Naive thymus-derived CD4-positive, alpha-beta T cell (primary cell): ENCODE measurements at regions of chr3 and their contacts with region 1.

Region 1: GRCh38 chr3:48556793-48557626 is at the start of gene PFKFB4:
- DNase-seq: peak; percentile 97 to 100 (median 99)
- ATAC-seq: peak; percentile 91
- H3K4me3 ChIP-seq: peak within 1 kb of the TSS; percentile 85
- H3K4me3 Mint-ChIP-seq: peak within 1 kb of the TSS; percentile 77 to 93 (median 84)
- H3K27ac ChIP-seq: peak within 1 kb of the TSS; percentile 52
- H3K27ac Mint-ChIP-seq: peak within 1 kb of the TSS; percentile 62 to 90 (median 80)
- H3K4me1 ChIP-seq: peaks cover 5 to 10% of the 10 kb centered on the region in 2 donors
- H3K4me1 Mint-ChIP-seq: peaks cover 11 to 66% (median 24%) of the 10 kb centered on the region in 7 donors
- H3K27me3 ChIP-seq: no peaks in the 10 kb centered on the region
- H3K27me3 Mint-ChIP-seq: peaks cover 0 to 3% (median 0%) of the 10 kb centered on the region in 5 donors
- total RNA-seq, gene PFKFB4: 3.0 to 64.2 (median 3.7) TPM

Region 2: DNA sequence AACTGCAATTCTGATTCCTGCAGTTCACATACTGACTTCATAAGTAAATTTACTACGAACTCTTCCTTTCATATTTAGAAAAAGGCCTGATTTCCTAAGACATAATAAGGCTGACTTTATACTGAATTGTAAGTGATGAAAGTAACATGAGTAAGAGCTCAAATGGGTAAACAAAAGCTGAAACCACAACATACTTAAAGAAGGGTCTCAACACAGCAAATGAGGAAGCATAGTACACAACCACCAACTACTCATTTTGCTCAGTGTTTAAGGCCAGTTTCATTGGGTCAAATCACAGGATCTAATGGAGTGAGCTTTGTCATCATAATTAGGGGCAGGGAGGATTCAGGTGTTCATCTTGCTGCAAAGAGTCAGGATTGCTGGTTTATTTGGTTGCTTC is 1474.5 kb before region 1 on chr3:
- CTCF ChIA-PET with region 1: no interaction called
- POLR2A ChIA-PET with region 1: no interaction called
- intact Hi-C with region 1: no loop called
- DNase-seq: no peak
- ATAC-seq: peak; percentile 48
- H3K4me3 ChIP-seq: no peak overlapping the region
- H3K4me3 Mint-ChIP-seq: no peak overlapping the region
- H3K27ac ChIP-seq: no peak overlapping the region
- H3K27ac Mint-ChIP-seq: peak overlapping the region in 6 of 9 donors; percentile 13 to 77 (median 56)
- H3K4me1 ChIP-seq: no peaks in the 10 kb centered on the region
- H3K4me1 Mint-ChIP-seq: peaks cover 10 to 31% (median 20%) of the 10 kb centered on the region in 7 donors
- H3K27me3 ChIP-seq: no peaks in the 10 kb centered on the region
- H3K27me3 Mint-ChIP-seq: no peaks in the 10 kb centered on the region

Region 3: DNA sequence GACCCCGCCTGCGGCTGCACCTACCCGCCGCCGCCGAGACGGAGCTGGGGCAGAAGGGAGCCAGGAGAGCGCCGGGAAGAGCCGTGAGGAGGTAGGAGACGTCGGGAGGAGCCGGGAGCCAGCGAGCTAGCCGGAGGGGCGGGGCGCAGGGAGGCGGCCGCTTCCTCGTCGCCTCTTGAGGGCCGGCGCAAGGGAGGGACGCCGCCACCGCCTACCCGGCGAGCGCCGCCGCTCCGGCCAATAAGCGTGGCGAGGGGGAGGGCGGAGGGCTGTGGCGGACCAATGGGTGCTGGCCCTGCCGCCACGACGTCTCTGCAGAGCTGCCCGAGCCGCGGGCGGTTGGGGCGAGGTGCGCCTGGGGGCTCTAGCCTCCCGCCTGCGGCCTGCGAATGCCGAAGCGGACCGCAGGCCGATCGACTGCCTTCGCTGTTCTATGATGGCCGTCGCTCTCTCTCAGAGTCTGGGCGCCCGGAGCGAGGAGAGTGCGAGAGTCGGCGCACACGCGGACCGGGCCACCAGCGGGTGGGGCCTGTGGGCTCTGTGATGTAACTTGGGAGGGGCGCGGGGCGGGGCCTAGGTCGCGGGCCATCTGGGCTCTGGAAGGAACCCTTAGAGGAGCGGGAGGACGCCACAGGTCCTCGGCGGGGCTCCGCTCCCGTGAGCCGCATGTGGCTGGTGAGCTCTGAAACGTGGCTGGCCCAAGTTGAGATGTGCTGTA is 468.1 kb before region 1 on chr3:
- CTCF ChIA-PET with region 1: no interaction called
- POLR2A ChIA-PET with region 1: no interaction called
- intact Hi-C with region 1: loop called in 1 of 2 experiments (anchors 2 kb)
- DNase-seq: peak; percentile 89 to 96 (median 94)
- ATAC-seq: peak; percentile 97
- H3K4me3 ChIP-seq: peak overlapping the region; percentile 85
- H3K4me3 Mint-ChIP-seq: peak overlapping the region; percentile 90 to 99 (median 96)
- H3K27ac ChIP-seq: peak overlapping the region; percentile 95
- H3K27ac Mint-ChIP-seq: peak overlapping the region; percentile 71 to 99 (median 98)
- H3K4me1 ChIP-seq: peaks cover 7 to 11% of the 10 kb centered on the region in 2 donors
- H3K4me1 Mint-ChIP-seq: peaks cover 14 to 33% (median 29%) of the 10 kb centered on the region in 7 donors
- H3K27me3 ChIP-seq: no peaks in the 10 kb centered on the region
- H3K27me3 Mint-ChIP-seq: peaks cover 0 to 18% (median 0%) of the 10 kb centered on the region in 5 donors

Region 4: GRCh38 chr3:48268381-48269183 is 288.4 kb before region 1 on chr3:
- CTCF ChIA-PET with region 1: interaction called, 3 read pairs
- POLR2A ChIA-PET with region 1: interaction called, 3 read pairs
- intact Hi-C with region 1: loop called (anchors 1 to 2 kb)
- DNase-seq: peak; percentile 25 to 92 (median 80)
- ATAC-seq: peak; percentile 97
- H3K4me3 ChIP-seq: peak overlapping the region; percentile 40
- H3K4me3 Mint-ChIP-seq: peak overlapping the region; percentile 74 to 93 (median 82)
- H3K27ac ChIP-seq: peak overlapping the region; percentile 71
- H3K27ac Mint-ChIP-seq: peak overlapping the region; percentile 89 to 99 (median 93)
- H3K4me1 ChIP-seq: peaks cover 14 to 26% of the 10 kb centered on the region in 2 donors
- H3K4me1 Mint-ChIP-seq: peaks cover 17 to 40% (median 39%) of the 10 kb centered on the region in 7 donors
- H3K27me3 ChIP-seq: no peaks in the 10 kb centered on the region
- H3K27me3 Mint-ChIP-seq: no peaks in the 10 kb centered on the region

Region 5: DNA sequence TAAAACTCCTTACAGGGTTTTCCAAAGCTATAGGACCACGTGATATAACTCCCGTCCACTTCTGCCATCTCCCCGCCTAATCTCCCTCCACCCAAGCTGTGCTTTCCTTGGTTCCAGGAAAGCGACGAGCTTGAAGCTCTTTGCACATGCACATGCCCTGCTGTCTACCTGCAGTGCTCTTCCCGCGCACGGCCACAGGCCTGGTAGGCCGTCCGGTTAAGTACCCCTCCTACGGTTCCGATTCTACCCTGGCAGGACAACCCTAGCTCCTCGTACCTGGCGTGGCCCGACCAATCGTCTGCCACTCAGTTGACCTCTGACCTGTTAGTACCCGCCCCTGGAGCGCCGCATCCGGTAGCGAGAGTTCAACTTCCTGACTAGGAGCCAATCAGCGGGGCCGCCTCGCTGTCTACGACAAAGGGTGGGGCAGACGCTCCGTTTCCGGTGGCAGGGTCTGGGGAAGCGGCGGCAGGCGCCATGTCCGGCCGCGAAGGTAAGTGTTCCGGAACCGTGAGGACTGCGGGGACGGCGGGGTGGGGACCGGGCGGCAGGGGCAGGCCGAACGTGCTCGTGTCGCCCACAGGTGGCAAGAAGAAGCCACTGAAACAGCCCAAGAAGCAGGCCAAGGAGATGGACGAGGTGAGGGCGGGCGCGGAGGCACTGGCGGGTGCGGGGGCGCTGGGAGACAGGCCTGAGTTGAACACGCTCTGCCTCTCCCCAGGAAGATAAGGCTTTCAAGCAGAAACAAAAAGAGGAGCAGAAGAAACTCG is 117.0 kb before region 1 on chr3 and contains the starts of genes CCDC51 and TMA7:
- CTCF ChIA-PET with region 1: interaction called, 10 read pairs
- POLR2A ChIA-PET with region 1: interaction called, 13 read pairs
- intact Hi-C with region 1: loop called in 1 of 2 experiments (anchors 1 kb)
- DNase-seq: peak; percentile 90 to 98 (median 96)
- ATAC-seq: peak; percentile 97
- H3K4me3 ChIP-seq: peak within 1 kb of the TSS; percentile 78
- H3K4me3 Mint-ChIP-seq: peak within 1 kb of the TSS; percentile 86 to 100 (median 94)
- H3K27ac ChIP-seq: peak within 1 kb of the TSS; percentile 93
- H3K27ac Mint-ChIP-seq: peak within 1 kb of the TSS; percentile 92 to 100 (median 98)
- H3K4me1 ChIP-seq: peaks cover 18 to 19% of the 10 kb centered on the region in 2 donors
- H3K4me1 Mint-ChIP-seq: peaks cover 16 to 50% (median 34%) of the 10 kb centered on the region in 7 donors
- H3K27me3 ChIP-seq: no peaks in the 10 kb centered on the region
- H3K27me3 Mint-ChIP-seq: no peaks in the 10 kb centered on the region
- total RNA-seq, gene CCDC51: 3.6 to 16.5 (median 5.0) TPM
- total RNA-seq, gene TMA7: 193 to 278 (median 236) TPM

Region 6: GRCh38 chr3:48609088-48610005 is 52.3 kb after region 1 on chr3 and contains the start of gene UQCRC1:
- CTCF ChIA-PET with region 1: interaction called, 4 read pairs
- POLR2A ChIA-PET with region 1: interaction called, 4 read pairs
- intact Hi-C with region 1: loop called (anchors 1 kb)
- DNase-seq: peak; percentile 85 to 94 (median 93)
- ATAC-seq: peak; percentile 99
- H3K4me3 ChIP-seq: peak within 1 kb of the TSS; percentile 96
- H3K4me3 Mint-ChIP-seq: peak within 1 kb of the TSS; percentile 86 to 100 (median 98)
- H3K27ac ChIP-seq: peak within 1 kb of the TSS; percentile 84
- H3K27ac Mint-ChIP-seq: peak within 1 kb of the TSS; percentile 91 to 99 (median 97)
- H3K4me1 ChIP-seq: peaks cover 10 to 12% of the 10 kb centered on the region in 2 donors
- H3K4me1 Mint-ChIP-seq: peaks cover 12 to 31% (median 19%) of the 10 kb centered on the region in 7 donors
- H3K27me3 ChIP-seq: no peaks in the 10 kb centered on the region
- H3K27me3 Mint-ChIP-seq: no peaks in the 10 kb centered on the region
- total RNA-seq, gene UQCRC1: 77.3 to 156 (median 91.7) TPM

Region 7: GRCh38 chr3:48716982-48717746 is 160.2 kb after region 1 on chr3 and contains the start of gene IP6K2:
- CTCF ChIA-PET with region 1: no interaction called
- POLR2A ChIA-PET with region 1: no interaction called
- intact Hi-C with region 1: loop called in 1 of 2 experiments (anchors 1 kb)
- DNase-seq: peak; percentile 92 to 99 (median 97)
- ATAC-seq: peak; percentile 100
- H3K4me3 ChIP-seq: peak within 1 kb of the TSS; percentile 99
- H3K4me3 Mint-ChIP-seq: peak within 1 kb of the TSS; percentile 94 to 99 (median 98)
- H3K27ac ChIP-seq: peak within 1 kb of the TSS; percentile 84
- H3K27ac Mint-ChIP-seq: peak within 1 kb of the TSS; percentile 83 to 99 (median 96)
- H3K4me1 ChIP-seq: peaks cover 23 to 29% of the 10 kb centered on the region in 2 donors
- H3K4me1 Mint-ChIP-seq: peaks cover 33 to 46% (median 39%) of the 10 kb centered on the region in 7 donors
- H3K27me3 ChIP-seq: no peaks in the 10 kb centered on the region
- H3K27me3 Mint-ChIP-seq: peaks cover 0 to 22% (median 0%) of the 10 kb centered on the region in 5 donors
- total RNA-seq, gene IP6K2: 72.0 to 94.3 (median 85.9) TPM

Region 8: DNA sequence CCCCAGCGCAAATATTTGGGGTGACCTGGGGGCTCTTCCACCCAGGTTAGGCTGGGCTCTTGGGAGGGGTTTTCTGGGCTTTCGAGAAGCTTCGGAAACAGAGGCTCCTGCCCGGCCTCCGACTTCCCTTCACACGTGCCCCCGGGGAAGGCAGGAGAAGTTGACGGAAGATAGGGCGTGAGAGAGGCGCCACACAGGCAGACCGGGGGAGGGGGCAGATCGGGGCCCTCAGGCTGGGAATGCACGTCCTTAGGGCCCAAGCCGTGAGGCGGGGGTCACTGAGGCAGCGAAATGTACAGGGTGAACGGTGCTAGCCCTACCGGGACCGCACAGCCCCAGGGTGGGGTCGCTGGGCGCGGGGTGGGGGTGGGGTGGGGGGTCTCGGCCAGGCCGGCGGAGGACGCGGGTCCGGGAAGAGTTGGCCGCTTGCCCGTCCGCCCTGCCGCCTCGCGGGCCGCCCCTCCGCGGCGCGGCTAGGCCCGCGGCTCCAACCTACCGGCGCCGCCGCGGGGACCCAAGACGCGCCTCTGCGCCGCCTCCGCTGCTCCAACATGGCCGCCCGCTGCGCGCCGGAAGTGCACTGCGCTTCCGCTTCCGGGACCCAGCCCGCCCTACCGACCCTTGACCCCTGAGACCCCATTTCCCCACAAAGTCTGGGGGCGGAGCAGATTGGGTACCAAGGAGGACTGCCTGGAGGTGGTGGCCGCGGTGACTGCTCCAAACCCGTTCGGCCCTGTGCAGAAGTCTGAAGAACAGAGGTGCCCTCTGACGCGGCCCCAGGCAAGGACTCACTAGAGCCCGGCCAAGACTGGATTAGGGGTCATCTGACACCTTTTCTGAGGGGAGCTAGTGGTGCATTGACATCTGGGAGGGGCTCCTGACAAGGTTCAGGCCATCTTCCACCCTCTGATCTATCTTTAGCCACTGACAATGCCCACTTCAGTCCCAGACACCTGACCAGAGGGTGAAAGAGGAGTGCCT is 609.1 kb after region 1 on chr3 and contains the start of gene CCDC71:
- CTCF ChIA-PET with region 1: no interaction called
- POLR2A ChIA-PET with region 1: no interaction called
- intact Hi-C with region 1: loop called in 1 of 2 experiments (anchors 5 kb)
- DNase-seq: peak; percentile 63 to 82 (median 72)
- ATAC-seq: peak; percentile 85
- H3K4me3 ChIP-seq: peak within 1 kb of the TSS; percentile 58
- H3K4me3 Mint-ChIP-seq: peak within 1 kb of the TSS; percentile 89 to 96 (median 92)
- H3K27ac ChIP-seq: peak within 1 kb of the TSS; percentile 79
- H3K27ac Mint-ChIP-seq: peak within 1 kb of the TSS; percentile 87 to 96 (median 93)
- H3K4me1 ChIP-seq: peaks cover 16 to 29% of the 10 kb centered on the region in 2 donors
- H3K4me1 Mint-ChIP-seq: peaks cover 16 to 51% (median 42%) of the 10 kb centered on the region in 7 donors
- H3K27me3 ChIP-seq: no peaks in the 10 kb centered on the region
- H3K27me3 Mint-ChIP-seq: no peaks in the 10 kb centered on the region
- total RNA-seq, gene CCDC71: 16.5 to 39.5 (median 26.3) TPM